Activated CD4-positive, alpha-beta memory T cell treated with anti-CD3 and anti-CD28 coated beads for 36 hours (primary cell): ENCODE measurements at regions of chr7 and their contacts with region 1.

Region 1: GRCh38 chr7:974820-975681 is at the start of gene COX19:
- DNase-seq: peak; percentile 94
- H3K4me3 Mint-ChIP-seq: peak within 1 kb of the TSS; percentile 95
- H3K27ac Mint-ChIP-seq: peak within 1 kb of the TSS; percentile 90
- H3K4me1 Mint-ChIP-seq: peaks cover 27% of the 10 kb centered on the region
- H3K27me3 Mint-ChIP-seq: no peaks in the 10 kb centered on the region
- total RNA-seq, gene COX19: 14.1 to 15.6 TPM

Region 2: DNA sequence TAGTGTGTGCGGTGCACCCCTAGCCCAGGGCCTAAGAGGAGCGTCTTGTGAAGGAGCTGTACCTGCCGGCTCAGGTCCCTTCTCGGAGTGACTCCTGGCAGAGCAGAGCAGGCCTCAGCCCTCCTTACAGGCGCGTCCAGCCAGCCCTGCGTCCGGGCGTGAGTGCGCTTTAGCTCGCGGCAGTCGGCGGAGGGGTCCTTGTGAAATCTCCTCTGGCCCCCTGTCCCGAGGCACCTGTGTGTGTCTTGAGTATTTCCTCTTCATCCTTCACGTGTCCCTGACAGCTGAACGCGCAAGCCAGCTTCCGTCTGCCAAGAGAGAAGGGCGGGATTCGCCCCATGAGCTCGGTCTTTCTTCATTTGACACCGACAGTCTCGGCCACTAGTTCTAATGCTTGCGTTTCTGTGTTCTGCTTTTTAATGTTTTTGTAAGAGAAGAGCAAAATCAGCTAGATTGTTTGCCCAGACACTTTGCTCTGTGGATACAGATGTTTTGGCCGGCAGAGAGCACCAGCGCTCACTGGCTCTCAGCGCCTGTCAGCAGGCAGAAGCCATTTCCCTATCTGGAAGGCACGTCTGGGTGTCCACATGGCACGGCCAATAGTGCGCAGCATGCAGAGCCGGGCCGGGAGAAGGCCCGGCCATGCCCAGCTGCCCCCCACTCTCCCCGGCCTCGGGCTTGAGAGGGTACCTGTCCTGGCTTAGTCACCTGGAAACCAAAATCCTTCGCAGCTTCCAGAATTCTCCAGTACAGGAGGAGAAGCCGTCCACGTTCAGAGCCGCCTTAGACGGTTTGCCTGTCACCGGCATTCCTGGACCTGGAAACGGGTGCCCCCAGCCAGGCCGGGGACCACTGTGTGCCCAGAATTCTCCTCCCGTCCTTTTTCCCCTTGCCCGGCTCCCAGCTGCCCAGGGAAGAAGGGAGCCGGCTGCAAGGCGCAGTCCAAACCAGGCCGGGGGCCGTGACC is 91.7 kb before region 1 on chr7:
- CTCF ChIA-PET with region 1: no interaction called
- POLR2A ChIA-PET with region 1: no interaction called
- intact Hi-C with region 1: no loop called
- DNase-seq: no peak
- H3K4me3 Mint-ChIP-seq: no peak overlapping the region
- H3K27ac Mint-ChIP-seq: no peak overlapping the region
- H3K4me1 Mint-ChIP-seq: peaks cover 30% of the 10 kb centered on the region
- H3K27me3 Mint-ChIP-seq: no peaks in the 10 kb centered on the region

Region 3: GRCh38 chr7:909358-910329 is 65.4 kb before region 1 on chr7:
- CTCF ChIA-PET with region 1: interaction called, 27 read pairs
- POLR2A ChIA-PET with region 1: interaction called, 6 read pairs
- intact Hi-C with region 1: no loop called
- DNase-seq: no peak
- H3K4me3 Mint-ChIP-seq: peak overlapping the region; percentile 8
- H3K27ac Mint-ChIP-seq: no peak overlapping the region
- H3K4me1 Mint-ChIP-seq: peaks cover 10% of the 10 kb centered on the region
- H3K27me3 Mint-ChIP-seq: no peaks in the 10 kb centered on the region

Region 4: GRCh38 chr7:1028031-1028770 is 53.1 kb after region 1 on chr7:
- CTCF ChIA-PET with region 1: no interaction called
- POLR2A ChIA-PET with region 1: no interaction called
- intact Hi-C with region 1: loop called (anchors 1 kb)
- DNase-seq: peak; percentile 92
- H3K4me3 Mint-ChIP-seq: peak overlapping the region; percentile 66
- H3K27ac Mint-ChIP-seq: peak overlapping the region; percentile 83
- H3K4me1 Mint-ChIP-seq: peaks cover 37% of the 10 kb centered on the region
- H3K27me3 Mint-ChIP-seq: no peaks in the 10 kb centered on the region

Region 5: DNA sequence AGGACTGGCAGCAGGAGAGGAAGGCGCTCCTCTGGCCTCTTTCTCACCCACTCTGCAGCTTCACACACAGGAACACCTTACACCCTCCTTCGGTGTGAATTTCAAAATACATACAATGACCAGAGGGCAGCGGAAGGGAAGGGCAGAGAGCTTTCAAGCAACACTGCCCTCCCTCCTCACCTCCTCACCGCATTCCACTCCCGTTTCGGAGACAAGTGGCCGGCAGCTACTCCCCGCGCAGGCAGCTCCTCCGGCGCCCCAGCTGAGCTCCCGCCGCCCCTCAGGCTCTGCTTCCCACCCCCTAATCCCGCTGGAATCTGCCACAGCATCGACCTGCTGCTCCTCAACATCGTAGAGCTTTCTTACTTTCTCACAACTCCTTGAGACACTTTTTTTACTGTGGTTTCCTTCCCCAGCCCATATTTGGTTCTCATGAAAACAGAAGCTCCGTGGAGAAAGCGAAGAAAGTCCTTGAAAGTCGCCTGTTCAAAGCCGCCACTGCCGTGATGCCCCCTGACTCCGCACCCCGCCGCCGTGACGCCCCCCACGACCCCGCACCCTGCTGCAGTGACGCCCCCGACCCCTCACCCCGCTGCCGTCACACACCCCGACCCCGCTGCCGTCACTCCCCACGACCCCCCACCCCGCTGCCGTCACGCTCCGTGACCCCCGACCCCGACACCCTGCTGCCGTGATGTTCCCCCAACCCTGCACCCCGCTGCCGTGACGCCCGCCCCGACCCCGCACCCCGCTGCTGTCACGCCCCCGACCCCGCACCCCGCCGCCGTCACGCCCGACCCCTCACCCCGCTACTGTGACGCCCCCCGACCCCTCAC is 98.3 kb after region 1 on chr7:
- CTCF ChIA-PET with region 1: no interaction called
- POLR2A ChIA-PET with region 1: no interaction called
- intact Hi-C with region 1: no loop called
- DNase-seq: no peak
- H3K4me3 Mint-ChIP-seq: no peak overlapping the region
- H3K27ac Mint-ChIP-seq: no peak overlapping the region
- H3K4me1 Mint-ChIP-seq: no peaks in the 10 kb centered on the region
- H3K27me3 Mint-ChIP-seq: no peaks in the 10 kb centered on the region